Activated T-helper 2 cell treated with anti-CD3 and anti-CD28 coated beads, Interferon-gamma antibody, Interleukin-2, Interleukin-4, amounts not matched to agents 10 μg/mL and 5 μg/mL and 100 μg/mL, durations not matched to agents 14 hours and 24 hours and 36 hours (primary cell): ENCODE measurements at regions of chr7 and their contacts with region 1.

Region 1: GRCh38 chr7:99997545-99998137 is 17.8 kb upstream of the ZKSCAN1 start:
- DNase-seq: peak; percentile 65
- H3K4me3 Mint-ChIP-seq: peak overlapping the region; percentile 66
- H3K27ac Mint-ChIP-seq: peak overlapping the region; percentile 83
- H3K4me1 Mint-ChIP-seq: peaks cover 10% of the 10 kb centered on the region
- H3K27me3 Mint-ChIP-seq: no peaks in the 10 kb centered on the region

Region 2: GRCh38 chr7:99918959-99919813 is 78.5 kb before region 1 on chr7 and contains the start of gene TRIM4:
- intact Hi-C with region 1: no loop called
- DNase-seq: peak; percentile 90
- H3K4me3 Mint-ChIP-seq: peak within 1 kb of the TSS; percentile 96
- H3K27ac Mint-ChIP-seq: peak within 1 kb of the TSS; percentile 94
- H3K4me1 Mint-ChIP-seq: peaks cover 29% of the 10 kb centered on the region
- H3K27me3 Mint-ChIP-seq: no peaks in the 10 kb centered on the region
- total RNA-seq, gene TRIM4: 21.8 and 23.2 TPM in 2 replicates

Region 3: DNA sequence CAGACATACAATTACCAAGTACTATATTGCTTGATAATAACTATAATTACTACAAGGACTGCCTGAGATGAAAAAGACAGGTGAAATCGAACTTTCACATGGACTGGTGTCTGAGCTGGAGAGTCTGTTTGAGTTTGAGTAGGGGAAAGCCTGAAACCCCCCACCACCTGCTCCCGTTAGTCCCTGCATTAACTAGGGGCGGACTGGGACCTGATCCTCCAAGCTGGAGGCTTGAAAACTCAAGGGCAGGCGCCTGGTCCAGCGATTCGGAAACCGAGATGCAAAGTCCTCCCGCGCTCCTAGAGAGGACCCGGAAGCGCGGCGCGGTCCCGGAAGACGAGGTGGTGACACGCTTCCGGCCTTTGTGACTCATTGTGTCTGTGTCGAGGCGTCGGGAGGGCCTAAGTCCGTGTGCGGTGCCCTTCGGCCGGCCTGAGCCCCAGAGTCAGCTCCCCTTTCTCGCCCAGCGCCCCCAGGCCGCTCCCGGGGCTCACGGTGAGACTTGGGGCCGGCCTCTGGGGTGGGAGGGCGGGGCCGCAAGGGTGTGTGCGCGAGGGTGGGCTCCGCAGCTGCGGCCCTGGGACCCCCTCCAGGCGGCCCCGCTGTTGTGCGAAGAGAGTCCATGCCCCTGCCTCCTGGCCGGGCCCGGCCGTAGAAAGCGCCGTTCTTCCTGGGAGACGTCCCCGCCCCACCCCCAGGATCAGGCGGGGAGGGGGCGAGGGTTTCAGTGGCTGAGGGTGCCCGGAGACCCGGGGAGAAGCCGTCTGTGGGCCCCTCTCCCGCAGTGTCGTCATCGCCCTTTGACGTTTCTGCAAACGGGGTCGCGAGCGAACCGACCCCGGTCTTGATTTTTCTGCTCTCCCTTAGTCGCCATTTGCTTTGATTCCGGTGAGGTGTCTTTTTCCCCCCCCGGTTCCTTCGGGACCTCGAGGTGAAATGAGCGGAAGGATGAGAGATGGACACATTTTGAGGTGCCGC is 17.9 kb after region 1 on chr7 and contains the start of gene ZKSCAN1:
- intact Hi-C with region 1: loop called (anchors 1 kb)
- DNase-seq: peak; percentile 80
- H3K4me3 Mint-ChIP-seq: peak within 1 kb of the TSS; percentile 91
- H3K27ac Mint-ChIP-seq: peak within 1 kb of the TSS; percentile 95
- H3K4me1 Mint-ChIP-seq: peaks cover 28% of the 10 kb centered on the region
- H3K27me3 Mint-ChIP-seq: no peaks in the 10 kb centered on the region
- total RNA-seq, gene ZKSCAN1: 59.0 and 63.5 TPM in 2 replicates